Activated CD8-positive, alpha-beta memory T cell treated with anti-CD3 and anti-CD28 coated beads, Interleukin-2, amount 10 ng/mL, durations not matched to agents 7 days and 5 days (primary cell): ENCODE measurements at regions of chr20 and their contacts with region 1.

Region 1: GRCh38 chr20:956330-956951 is 40.3 kb upstream of the ANGPT4 start:
- DNase-seq: peak; percentile 80
- ATAC-seq: peak; percentile 90
- H3K4me3 Mint-ChIP-seq: no peak overlapping the region
- H3K27ac Mint-ChIP-seq: no peak overlapping the region
- H3K4me1 Mint-ChIP-seq: peaks cover 2% of the 10 kb centered on the region
- H3K27me3 Mint-ChIP-seq: peaks cover 34% of the 10 kb centered on the region

Region 2: DNA sequence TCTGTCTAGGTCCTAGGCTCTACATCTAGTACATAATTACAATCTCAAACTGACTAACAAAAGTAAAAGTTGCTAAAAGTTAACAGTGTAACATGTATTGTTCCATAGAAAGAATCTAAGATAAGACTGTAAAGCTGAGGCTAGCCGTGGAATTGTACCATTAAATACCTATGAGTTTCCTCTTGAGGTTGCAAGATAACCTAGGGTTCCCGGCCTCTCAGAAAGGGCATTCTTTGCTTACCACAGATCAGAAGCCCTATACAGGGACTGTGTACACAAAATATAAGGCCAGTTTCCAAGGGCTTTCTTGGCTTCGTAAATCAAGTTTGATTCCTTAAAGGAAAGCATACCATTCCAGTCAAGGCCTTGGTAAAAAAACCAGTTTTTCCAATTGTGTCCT is 176.7 kb before region 1 on chr20:
- CTCF ChIA-PET with region 1: no interaction called
- DNase-seq: no peak
- ATAC-seq: no peak
- H3K4me3 Mint-ChIP-seq: no peak overlapping the region
- H3K27ac Mint-ChIP-seq: no peak overlapping the region
- H3K4me1 Mint-ChIP-seq: no peaks in the 10 kb centered on the region
- H3K27me3 Mint-ChIP-seq: peaks cover 6% of the 10 kb centered on the region

Region 3: GRCh38 chr20:815914-816606 is 140.4 kb before region 1 on chr20:
- CTCF ChIA-PET with region 1: interaction called, 208 read pairs
- DNase-seq: peak; percentile 70
- ATAC-seq: peak; percentile 48
- H3K4me3 Mint-ChIP-seq: no peak overlapping the region
- H3K27ac Mint-ChIP-seq: no peak overlapping the region
- H3K4me1 Mint-ChIP-seq: peaks cover 5% of the 10 kb centered on the region
- H3K27me3 Mint-ChIP-seq: peaks cover 5% of the 10 kb centered on the region

Region 4: DNA sequence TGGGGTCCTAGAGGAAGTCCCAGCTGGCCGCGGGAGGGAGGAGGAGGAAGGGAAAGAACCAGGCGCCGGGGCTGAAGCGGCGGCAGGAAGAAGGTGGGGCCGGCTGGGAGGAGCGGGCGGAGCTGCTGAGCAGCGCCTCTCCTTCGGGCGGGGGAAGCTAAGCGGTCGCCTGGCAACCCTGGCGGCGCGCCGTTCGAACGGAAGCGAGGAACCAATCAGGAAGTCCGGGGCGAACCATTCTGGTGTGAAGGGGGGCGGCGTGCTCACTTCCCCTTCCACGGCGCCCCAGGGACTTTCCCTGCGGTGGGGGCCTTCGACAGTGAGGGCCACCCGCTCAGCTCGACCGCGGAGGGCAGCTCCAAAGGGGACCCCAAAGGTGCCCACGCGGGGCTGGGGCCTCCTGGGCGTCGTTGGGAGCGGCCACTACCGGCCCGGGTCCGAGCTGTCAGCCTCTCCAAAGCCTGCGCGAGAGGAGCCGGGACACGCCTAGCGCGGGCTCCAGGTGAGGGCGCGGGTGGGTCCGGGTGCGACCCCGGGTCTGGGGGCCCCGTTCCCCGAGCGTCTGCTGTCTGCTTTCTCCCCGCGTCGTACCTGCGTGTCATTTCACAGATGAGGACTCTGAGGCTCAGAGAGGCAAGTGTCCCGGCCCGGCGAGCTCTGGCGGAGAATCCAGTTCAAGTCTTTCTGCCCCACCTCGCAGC is 122.8 kb before region 1 on chr20 and contains the start of gene FAM110A:
- CTCF ChIA-PET with region 1: interaction called, 13 read pairs
- DNase-seq: peak; percentile 97
- ATAC-seq: peak; percentile 94
- H3K4me3 Mint-ChIP-seq: peak within 1 kb of the TSS; percentile 90
- H3K27ac Mint-ChIP-seq: peak within 1 kb of the TSS; percentile 84
- H3K4me1 Mint-ChIP-seq: peaks cover 43% of the 10 kb centered on the region
- H3K27me3 Mint-ChIP-seq: no peaks in the 10 kb centered on the region
- total RNA-seq, gene FAM110A: 34.3 to 37.0 TPM

Region 5: GRCh38 chr20:973785-974194 is 17.3 kb after region 1 on chr20:
- CTCF ChIA-PET with region 1: interaction called, 22 read pairs
- DNase-seq: peak; percentile 55
- ATAC-seq: peak; percentile 75
- H3K4me3 Mint-ChIP-seq: no peak overlapping the region
- H3K27ac Mint-ChIP-seq: peak overlapping the region; percentile 10
- H3K4me1 Mint-ChIP-seq: peaks cover 2% of the 10 kb centered on the region
- H3K27me3 Mint-ChIP-seq: peaks cover 11% of the 10 kb centered on the region

Region 6: GRCh38 chr20:1212607-1213396 is 256.4 kb after region 1 on chr20:
- CTCF ChIA-PET with region 1: interaction called, 22 read pairs
- DNase-seq: peak; percentile 83
- ATAC-seq: peak; percentile 96
- H3K4me3 Mint-ChIP-seq: no peak overlapping the region
- H3K27ac Mint-ChIP-seq: no peak overlapping the region
- H3K4me1 Mint-ChIP-seq: peaks cover 31% of the 10 kb centered on the region
- H3K27me3 Mint-ChIP-seq: peaks cover 21% of the 10 kb centered on the region